ENCODE measurements at regions of chr1 and their contacts with region 1.

Region 1: DNA sequence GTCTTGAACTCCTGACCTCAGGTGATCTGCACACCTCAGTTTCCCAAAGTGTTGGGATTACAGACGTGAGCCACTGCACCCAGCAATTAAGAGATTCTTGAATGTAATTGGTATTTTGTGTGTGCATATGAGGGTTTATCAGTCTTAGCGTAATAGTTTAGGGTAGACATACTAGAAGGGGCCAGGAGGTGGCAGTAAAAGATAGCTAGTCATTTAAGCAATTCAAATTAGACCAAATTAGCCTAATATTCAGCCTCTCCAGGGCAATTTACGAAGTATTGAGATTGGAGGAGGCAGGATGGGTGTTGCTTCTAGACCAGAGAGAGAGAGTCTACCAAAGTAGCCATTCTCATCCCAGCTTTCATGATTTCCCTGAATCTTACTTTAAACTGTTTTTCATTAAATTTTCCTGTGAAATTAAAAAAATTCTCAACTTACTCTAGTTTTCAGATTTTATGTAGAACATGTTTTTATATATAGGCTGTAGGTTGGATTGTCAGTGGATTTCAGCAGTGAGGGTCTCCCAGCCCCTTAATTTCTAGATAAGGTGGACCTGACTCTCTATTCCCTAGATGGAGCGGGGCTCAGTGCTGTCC is 119.7 kb downstream of the HHAT start:
- DNase-seq: peak; percentile 73
- ATAC-seq: peak; percentile 93
- H3K4me3 ChIP-seq: no peak overlapping the region
- H3K27ac ChIP-seq: no peak overlapping the region
- H3K4me1 ChIP-seq: peaks cover 7% of the 10 kb centered on the region; the same call in 1 of the 2 replicates
- H3K27me3 ChIP-seq: peaks cover 16% of the 10 kb centered on the region
- CTCF ChIP-seq: peak; percentile 84

Region 2: GRCh38 chr1:210407207-210407886 is 41.0 kb before region 1 on chr1:
- CTCF ChIA-PET with region 1: no interaction called
- POLR2A ChIA-PET with region 1: no interaction called
- intact Hi-C with region 1: loop called (anchors 5 kb)
- DNase-seq: peak; percentile 90
- ATAC-seq: peak; percentile 95
- H3K4me3 ChIP-seq: no peak overlapping the region
- H3K27ac ChIP-seq: no peak overlapping the region
- H3K4me1 ChIP-seq: no peaks in the 10 kb centered on the region
- H3K27me3 ChIP-seq: no peaks in the 10 kb centered on the region
- CTCF ChIP-seq: peak; percentile 99

Region 3: DNA sequence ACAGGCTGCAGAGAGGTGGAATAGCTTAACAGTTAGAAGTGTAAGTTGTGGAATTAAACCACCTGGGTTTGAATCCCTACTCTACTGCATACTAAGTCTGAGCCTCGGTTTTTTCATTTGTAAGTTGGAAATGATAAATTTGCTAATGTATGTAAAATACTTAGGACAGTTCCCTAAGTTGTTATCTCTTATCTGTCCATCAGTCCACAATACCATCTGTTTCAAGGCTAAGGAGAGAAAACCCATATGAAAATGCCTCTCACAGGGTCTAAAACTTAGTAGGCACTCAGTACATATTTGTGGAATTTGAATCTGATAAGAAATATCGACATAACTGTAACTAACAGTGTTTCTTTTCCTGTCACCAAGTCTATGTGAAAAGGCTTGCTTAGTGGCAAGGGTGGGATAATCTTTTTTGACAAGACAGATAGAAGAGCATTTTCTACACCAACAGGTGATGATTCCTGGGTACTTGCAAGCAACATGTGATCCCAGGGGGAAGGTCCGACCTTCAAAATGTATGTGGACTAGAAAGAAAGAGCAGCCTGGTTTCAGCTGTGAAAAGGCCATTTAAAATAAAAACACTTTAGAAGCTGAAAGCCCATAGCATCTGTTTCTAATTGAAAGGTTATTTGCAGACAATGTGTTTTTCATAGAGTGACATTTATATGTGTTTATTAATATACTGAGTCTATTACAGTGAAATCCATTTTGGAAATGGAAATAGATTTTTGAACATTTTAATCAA is 83.3 kb after region 1 on chr1:
- CTCF ChIA-PET with region 1: no interaction called
- POLR2A ChIA-PET with region 1: no interaction called
- intact Hi-C with region 1: loop called (anchors 2 kb)
- DNase-seq: no peak
- ATAC-seq: no peak
- H3K4me3 ChIP-seq: no peak overlapping the region
- H3K27ac ChIP-seq: no peak overlapping the region
- H3K4me1 ChIP-seq: no peaks in the 10 kb centered on the region
- H3K27me3 ChIP-seq: peaks cover 18% of the 10 kb centered on the region
- CTCF ChIP-seq: no peak

Region 4: DNA sequence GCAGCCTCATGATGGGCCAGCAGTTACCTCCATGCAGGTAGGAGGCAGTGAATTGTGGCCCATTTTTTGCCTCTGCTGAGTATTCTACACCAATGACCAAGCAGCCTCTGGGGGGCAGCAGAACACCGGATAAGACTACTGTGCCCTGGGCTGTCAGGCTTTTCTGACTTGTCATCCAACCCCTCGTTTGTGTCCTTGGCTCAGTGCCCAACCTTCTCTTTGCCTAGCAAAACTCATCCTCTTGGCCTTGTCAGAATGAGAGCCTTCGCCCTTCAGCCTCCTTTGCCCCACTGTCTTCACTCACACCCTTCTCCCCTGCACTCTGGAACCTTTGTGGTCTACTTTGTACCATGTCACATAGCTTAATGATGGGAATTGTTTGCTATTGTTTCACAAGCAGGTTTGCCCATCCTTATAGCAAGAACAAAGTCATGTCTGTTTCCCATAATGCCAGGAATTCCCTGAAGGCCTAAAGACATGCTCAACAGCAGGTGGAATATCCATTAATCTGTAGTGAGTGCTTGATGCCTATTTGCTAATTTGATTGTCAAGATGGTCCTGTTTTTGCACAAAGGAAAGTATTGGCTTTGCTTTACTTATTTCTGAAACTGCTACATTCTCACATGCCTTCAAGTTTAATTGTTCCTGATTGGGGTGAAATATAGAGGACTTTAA is 136.2 kb after region 1 on chr1:
- CTCF ChIA-PET with region 1: no interaction called
- POLR2A ChIA-PET with region 1: no interaction called
- intact Hi-C with region 1: loop called (anchors 1 kb)
- DNase-seq: peak; percentile 93
- ATAC-seq: peak; percentile 97
- H3K4me3 ChIP-seq: no peak overlapping the region
- H3K27ac ChIP-seq: no peak overlapping the region
- H3K4me1 ChIP-seq: no peaks in the 10 kb centered on the region
- H3K27me3 ChIP-seq: peaks cover 4% of the 10 kb centered on the region; the same call in 1 of the 2 replicates
- CTCF ChIP-seq: peak; percentile 92

Region 5: DNA sequence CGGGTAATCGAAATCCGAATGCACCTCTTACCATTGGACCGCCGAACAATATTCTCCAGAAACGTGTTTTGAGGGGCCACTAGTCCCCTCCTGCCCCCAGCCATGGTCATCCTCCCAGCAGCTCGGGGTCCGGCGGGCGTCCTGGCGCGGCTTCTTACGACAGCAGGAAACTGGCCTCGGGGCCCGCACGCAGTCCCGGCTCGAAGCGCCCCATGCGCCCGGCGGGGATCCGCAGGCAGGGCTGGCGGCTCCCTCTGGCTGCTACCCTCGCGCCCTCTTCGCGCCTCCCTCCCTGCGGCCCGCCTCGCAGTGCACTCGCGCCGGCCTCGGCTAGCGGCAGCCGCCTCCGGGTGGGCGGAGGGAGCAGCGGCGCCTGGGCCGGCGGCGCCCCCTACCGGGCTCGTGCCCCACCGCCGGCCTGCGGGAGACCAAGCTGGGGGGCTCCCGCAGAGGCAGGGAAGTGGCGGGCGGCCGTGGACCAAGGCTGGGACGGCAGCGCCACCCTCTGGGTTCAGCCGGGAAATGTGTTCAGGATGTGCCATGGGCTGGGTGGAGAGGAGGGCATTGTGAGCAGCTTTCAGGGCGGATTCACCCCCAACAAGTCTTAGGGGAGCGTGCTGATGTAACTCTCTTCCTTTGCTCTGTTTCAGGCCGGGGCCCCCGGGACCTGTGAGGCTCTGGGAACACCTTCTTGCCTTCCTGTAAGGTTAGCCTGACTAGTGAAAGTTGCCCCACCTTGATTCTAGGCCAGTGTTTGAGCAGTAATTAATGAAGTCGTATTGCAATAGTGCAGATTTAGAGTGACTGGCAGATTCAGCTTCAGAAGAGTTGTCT is 685.7 kb after region 1 on chr1 and contains the start of gene KCNH1:
- CTCF ChIA-PET with region 1: interaction called, 7 read pairs
- POLR2A ChIA-PET with region 1: interaction called, 3 read pairs
- intact Hi-C with region 1: loop called (anchors 1 kb)
- DNase-seq: peak; percentile 76
- ATAC-seq: peak; percentile 85
- H3K4me3 ChIP-seq: peak within 1 kb of the TSS; percentile 52
- H3K27ac ChIP-seq: no peak within 1 kb of the TSS
- H3K4me1 ChIP-seq: 0 out of 2 replicates have a peak, but pooled peaks cover 4% of the 10 kb centered on the region
- H3K27me3 ChIP-seq: peaks cover 78% of the 10 kb centered on the region
- CTCF ChIP-seq: peak; percentile 94
- total RNA-seq, gene KCNH1: not detected in 2 replicates

Region 6: DNA sequence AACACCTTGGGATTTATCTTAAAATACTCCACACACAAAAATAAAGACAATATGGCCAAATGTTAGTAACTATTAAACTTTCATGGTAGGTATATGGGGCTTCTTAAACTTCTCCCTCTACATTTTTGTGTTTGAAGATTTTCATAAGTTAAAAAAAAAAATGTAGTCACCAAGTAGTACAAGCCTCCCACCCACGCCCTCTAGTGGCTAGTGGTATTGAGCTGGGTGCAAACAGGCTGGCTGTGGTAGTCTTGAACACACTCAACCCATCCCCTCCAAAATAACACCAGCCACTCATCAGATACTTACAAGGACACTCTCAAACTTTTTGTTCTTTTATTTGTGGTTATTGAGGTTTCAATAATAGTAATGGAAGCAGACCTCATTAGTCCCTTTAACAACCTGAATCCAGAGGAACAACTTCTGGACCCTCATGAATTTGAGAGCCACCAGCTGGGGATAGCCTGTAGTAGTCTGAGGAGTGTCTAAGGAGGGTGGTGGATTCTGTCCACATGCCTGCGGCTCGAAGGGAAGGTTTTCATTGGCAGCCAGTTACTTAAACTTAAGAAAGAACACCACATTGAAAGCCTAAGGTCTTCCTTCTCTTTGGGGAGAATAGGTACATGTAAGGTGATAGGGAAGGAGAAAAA is 1027.9 kb after region 1 on chr1:
- CTCF ChIA-PET with region 1: no interaction called
- POLR2A ChIA-PET with region 1: no interaction called
- intact Hi-C with region 1: loop called (anchors 5 kb)
- DNase-seq: peak; percentile 81
- ATAC-seq: peak; percentile 87
- H3K4me3 ChIP-seq: no peak overlapping the region
- H3K27ac ChIP-seq: no peak overlapping the region
- H3K4me1 ChIP-seq: no peaks in the 10 kb centered on the region
- H3K27me3 ChIP-seq: peaks cover 7% of the 10 kb centered on the region
- CTCF ChIP-seq: peak; percentile 97

Region 7: GRCh38 chr1:211514030-211514754 is 1065.8 kb after region 1 on chr1:
- CTCF ChIA-PET with region 1: no interaction called
- POLR2A ChIA-PET with region 1: no interaction called
- intact Hi-C with region 1: loop called (anchors 5 kb)
- DNase-seq: peak; percentile 95
- ATAC-seq: peak; percentile 80
- H3K4me3 ChIP-seq: peak overlapping the region; percentile 21; the same call in 1 of the 2 replicates
- H3K27ac ChIP-seq: no peak overlapping the region
- H3K4me1 ChIP-seq: peaks cover 28% of the 10 kb centered on the region
- H3K27me3 ChIP-seq: no peaks in the 10 kb centered on the region
- CTCF ChIP-seq: peak; percentile 92